ENCODE measurements at regions of chr6 and their contacts with region 1.

Region 1: DNA sequence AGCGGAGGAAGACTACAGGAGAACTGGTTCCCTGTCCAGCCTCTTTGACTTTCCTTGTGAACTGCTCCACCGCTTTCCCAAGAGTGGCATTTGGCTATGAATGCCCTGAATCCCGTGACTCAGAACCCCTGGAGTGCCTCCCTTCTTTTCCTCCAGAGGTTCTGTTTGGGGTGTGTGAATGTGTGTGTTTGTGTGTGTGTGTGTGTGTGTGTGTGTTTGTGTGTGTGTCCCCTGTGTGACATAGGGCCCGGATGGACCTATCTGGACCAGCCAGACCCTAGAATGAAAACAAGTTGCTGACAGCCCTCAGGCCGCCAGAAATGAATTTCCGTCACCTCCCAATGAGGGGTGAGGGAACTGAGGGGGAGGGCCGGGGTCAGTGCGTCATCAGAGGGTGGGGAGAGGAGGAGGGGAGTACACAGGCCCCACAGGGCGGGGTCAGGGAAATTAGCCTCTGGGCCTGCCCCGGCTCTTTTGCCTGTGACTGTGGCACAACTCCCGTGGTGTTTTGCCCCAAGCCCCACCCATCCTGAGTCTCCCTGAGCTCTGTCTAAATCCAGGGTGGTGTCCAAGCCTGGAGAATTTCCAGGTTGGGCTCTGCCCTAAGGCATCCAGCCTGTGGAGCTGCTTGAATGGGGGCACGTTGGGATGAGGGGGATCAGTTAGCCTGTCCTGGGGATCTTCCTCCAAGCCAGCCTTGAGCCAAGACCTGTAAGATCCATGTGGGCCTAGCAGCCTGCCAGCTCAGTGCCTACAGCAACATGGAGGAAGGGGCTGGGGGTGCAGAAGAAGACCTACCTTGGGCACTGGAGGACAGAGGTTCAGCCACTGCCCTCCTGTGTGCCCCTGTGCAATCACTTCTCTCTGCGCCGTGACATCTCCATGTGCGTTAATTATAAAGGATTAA is 15.2 kb upstream of the MRPS18A start:
- DNase-seq: peak; percentile 50
- ATAC-seq: peak; percentile 80
- H3K4me3 Mint-ChIP-seq: no peak overlapping the region
- H3K27ac Mint-ChIP-seq: peak overlapping the region; percentile 26
- H3K4me1 Mint-ChIP-seq: peaks cover 51% of the 10 kb centered on the region
- H3K27me3 Mint-ChIP-seq: peaks cover 4% of the 10 kb centered on the region
- CTCF ChIP-seq: no peak

Region 2: DNA sequence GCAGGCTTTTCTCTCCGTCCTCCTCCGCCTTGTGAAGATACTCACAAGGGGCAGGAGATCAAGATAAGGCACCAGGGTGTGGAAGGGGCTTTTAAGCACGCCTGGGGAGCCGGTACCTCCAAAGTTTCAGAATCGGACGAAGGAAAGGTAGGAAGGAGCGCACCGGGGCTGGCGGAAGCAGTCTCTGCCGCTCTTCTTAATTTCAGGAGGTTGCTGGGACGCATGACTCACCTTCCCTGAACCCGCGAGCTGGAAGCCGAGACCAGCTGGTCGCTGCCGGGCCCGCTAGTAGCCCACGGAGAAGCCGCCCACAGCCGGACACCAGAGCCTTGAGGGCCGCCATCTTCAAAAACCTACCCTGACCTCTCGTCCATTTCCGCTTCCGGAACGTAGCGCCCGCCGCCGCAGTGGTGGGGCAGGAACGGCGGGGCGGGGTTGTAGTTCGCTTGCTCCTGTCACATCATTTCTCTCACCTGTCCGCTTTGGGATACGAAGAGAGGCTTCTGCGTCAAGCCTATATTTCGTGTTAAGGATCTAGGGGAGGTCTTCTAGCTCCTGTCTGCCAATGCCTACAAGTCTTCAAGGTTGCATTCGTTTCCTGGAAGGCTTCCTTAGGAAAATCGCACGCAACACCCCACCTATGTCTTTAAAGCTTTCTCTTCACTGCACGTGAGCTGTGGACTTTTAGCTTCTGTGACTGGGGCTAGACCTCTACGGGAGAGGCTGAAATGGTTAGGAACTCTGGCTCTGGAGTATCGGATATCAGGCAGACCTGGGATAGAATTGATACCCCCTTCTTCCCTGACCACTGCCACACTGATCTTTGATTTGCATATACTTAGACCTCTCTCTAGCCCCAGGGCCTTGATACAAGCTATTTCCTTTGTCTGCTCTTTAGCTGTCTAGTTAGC is 15.1 kb before region 1 on chr6 and contains the start of gene MRPS18A:
- CTCF ChIA-PET with region 1: no interaction called
- POLR2A ChIA-PET with region 1: interaction called, 23 read pairs
- intact Hi-C with region 1: loop called (anchors 1 kb)
- DNase-seq: peak; percentile 70
- ATAC-seq: peak; percentile 89
- H3K4me3 Mint-ChIP-seq: peak within 1 kb of the TSS; percentile 95
- H3K27ac Mint-ChIP-seq: peak within 1 kb of the TSS; percentile 85
- H3K4me1 Mint-ChIP-seq: peaks cover 52% of the 10 kb centered on the region
- H3K27me3 Mint-ChIP-seq: no peaks in the 10 kb centered on the region
- CTCF ChIP-seq: no peak
- total RNA-seq, gene MRPS18A: 57.0 and 59.1 TPM in 2 replicates